Ascending aorta (tissue), 2 donors: ENCODE measurements at regions of chr19 and their contacts with region 1.

Region 1: DNA sequence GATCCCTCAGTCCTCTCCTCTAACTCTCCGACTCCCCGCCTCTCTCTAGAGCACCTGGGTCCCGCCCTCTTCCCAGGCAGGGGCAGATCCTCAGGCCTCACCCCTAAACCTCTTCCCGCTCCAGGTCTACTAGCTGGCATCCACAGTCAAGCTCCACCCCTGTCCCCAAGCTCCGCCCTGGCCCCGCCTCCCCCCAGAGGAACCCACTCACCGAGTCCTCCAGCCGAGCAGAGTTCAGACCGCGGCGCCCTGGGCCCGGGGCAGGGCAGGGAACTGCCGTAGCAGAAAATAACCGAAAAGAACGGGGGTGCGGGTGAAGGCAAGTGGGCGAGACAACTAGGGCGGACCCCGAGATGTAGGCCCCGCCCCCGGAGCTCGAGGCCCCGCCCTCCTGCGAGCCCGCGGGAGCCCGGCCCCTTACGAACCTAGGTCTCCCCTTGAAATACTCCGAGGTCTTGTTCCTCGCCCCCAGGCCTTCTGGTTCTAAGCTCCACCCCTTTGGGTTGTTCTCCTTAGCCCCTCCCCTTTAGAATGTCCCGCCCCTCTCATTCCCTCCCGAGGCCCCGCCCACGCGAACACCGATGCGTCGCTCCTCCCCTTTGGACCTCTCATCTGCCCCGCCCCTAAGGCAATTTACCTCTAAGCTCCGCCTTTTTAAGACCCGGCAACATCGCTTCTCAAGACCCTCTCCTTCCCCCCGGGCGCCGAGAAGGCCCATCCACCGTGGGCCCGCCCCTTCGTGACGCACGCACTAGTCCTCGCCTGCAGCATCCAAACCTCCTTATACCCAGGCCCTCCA is at the start of gene GGN:
- DNase-seq: peak; percentile 75 to 95
- H3K4me3 ChIP-seq: peak within 1 kb of the TSS; percentile 58 to 94
- H3K27ac ChIP-seq: peak within 1 kb of the TSS; percentile 91 to 97
- H3K4me1 ChIP-seq: peaks cover 6 to 20% of the 10 kb centered on the region in 2 donors
- H3K27me3 ChIP-seq: no peaks in the 10 kb centered on the region
- CTCF ChIP-seq: no peak
- total RNA-seq, gene GGN: 46.9 TPM

Region 2: GRCh38 chr19:37906869-37907734 is 480.6 kb before region 1 on chr19 and contains the start of gene SIPA1L3:
- intact Hi-C with region 1: loop called (anchors 10 kb)
- DNase-seq: peak; percentile 84 to 97
- H3K4me3 ChIP-seq: peak within 1 kb of the TSS; percentile 68 to 99
- H3K27ac ChIP-seq: peak within 1 kb of the TSS in 1 of 2 donors; percentile 58
- H3K4me1 ChIP-seq: peaks cover 0 to 4% of the 10 kb centered on the region in 2 donors
- H3K27me3 ChIP-seq: no peaks in the 10 kb centered on the region
- CTCF ChIP-seq: no peak
- total RNA-seq, gene SIPA1L3: 27.1 TPM

Region 3: GRCh38 chr19:38213911-38214625 is 173.7 kb before region 1 on chr19:
- intact Hi-C with region 1: no loop called
- DNase-seq: no peak
- H3K4me3 ChIP-seq: no peak overlapping the region
- H3K27ac ChIP-seq: no peak overlapping the region
- H3K4me1 ChIP-seq: peaks cover 9 to 23% of the 10 kb centered on the region in 2 donors
- H3K27me3 ChIP-seq: no peaks in the 10 kb centered on the region
- CTCF ChIP-seq: no peak

Region 4: GRCh38 chr19:38245826-38246498 is 141.8 kb before region 1 on chr19:
- intact Hi-C with region 1: loop called (anchors 5 kb)
- DNase-seq: peak in 1 of 2 donors; percentile 87
- H3K4me3 ChIP-seq: peak overlapping the region in 1 of 2 donors; percentile 6
- H3K27ac ChIP-seq: peak overlapping the region; percentile 90 to 99
- H3K4me1 ChIP-seq: peaks cover 18 to 63% of the 10 kb centered on the region in 2 donors
- H3K27me3 ChIP-seq: no peaks in the 10 kb centered on the region
- CTCF ChIP-seq: no peak

Region 5: GRCh38 chr19:38402967-38403861 is 15.5 kb after region 1 on chr19 and contains the start of gene FAM98C:
- intact Hi-C with region 1: loop called (anchors 1 kb)
- DNase-seq: peak; percentile 92 to 99
- H3K4me3 ChIP-seq: peak within 1 kb of the TSS; percentile 93
- H3K27ac ChIP-seq: peak within 1 kb of the TSS; percentile 72 to 73
- H3K4me1 ChIP-seq: peaks cover 0 to 11% of the 10 kb centered on the region in 2 donors
- H3K27me3 ChIP-seq: no peaks in the 10 kb centered on the region
- CTCF ChIP-seq: peak; percentile 95 to 97 (median 96)
- total RNA-seq, gene FAM98C: 11.1 TPM

Region 6: GRCh38 chr19:38718747-38719543 is 331.2 kb after region 1 on chr19:
- intact Hi-C with region 1: loop called (anchors 10 kb)
- DNase-seq: peak in 1 of 2 donors; percentile 86
- H3K4me3 ChIP-seq: no peak overlapping the region
- H3K27ac ChIP-seq: peak overlapping the region; percentile 76 to 85
- H3K4me1 ChIP-seq: peaks cover 13 to 47% of the 10 kb centered on the region in 2 donors
- H3K27me3 ChIP-seq: no peaks in the 10 kb centered on the region
- CTCF ChIP-seq: peak in 2 of 3 experiments; percentile 28 to 52